GM10248 (cell line): ENCODE measurements at regions of chr3 and their contacts with region 1.

Region 1: GRCh38 chr3:192481638-192482037 is 245.7 kb downstream of the FGF12 start:
- DNase-seq: no peak
- CTCF ChIP-seq: no peak

Region 2: DNA sequence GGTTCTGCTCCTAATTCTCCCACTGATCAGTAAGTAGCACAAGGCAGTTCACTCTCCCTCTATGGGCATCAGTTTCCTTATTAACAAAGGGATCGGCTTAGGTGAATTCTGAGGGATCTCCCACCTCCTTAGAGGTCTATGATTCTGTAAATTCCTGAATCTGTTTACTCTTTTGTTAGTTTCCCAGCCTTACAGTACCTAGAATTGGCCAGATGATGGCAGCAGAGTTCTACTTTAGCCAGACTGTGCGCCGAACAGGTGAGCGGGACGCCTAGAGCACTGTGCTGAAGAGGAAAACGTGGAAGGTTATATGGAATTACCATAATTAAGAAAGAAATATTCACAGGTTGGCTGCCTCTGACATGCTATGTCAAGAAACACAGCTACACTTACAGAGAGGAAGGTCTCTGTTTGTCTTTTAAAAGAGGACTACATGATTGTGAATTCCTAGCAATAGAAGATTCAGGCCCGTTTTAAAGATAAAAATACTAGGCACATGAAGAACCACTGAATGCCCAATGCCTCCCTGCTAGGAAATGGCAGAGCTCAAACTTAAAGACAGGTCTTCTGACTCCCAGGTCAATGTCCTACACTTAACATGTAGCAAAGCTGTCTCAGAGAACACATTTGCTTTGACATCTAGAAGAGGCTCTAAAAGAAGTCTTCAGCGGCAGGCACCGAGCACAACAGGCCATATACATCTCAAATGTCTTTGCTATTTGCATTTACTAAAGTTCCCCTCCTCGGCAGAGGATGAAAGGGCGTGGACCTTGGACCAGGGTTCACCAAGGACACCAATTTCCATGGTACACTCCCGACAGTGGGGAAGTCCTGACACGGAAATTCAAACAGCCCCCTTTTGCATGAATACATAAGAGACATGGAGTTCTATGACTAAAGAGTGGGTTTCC is 14.2 kb before region 1 on chr3:
- CTCF ChIA-PET with region 1: interaction called, 11 read pairs
- POLR2A ChIA-PET with region 1: no interaction called
- DNase-seq: peak; percentile 33
- CTCF ChIP-seq: peak; percentile 86

Region 3: GRCh38 chr3:193680220-193680619 is 1198.6 kb after region 1 on chr3:
- CTCF ChIA-PET with region 1: no interaction called
- POLR2A ChIA-PET with region 1: no interaction called
- DNase-seq: no peak
- CTCF ChIP-seq: no peak